ENCODE measurements at regions of chr5 and their contacts with region 1.

Region 1: DNA sequence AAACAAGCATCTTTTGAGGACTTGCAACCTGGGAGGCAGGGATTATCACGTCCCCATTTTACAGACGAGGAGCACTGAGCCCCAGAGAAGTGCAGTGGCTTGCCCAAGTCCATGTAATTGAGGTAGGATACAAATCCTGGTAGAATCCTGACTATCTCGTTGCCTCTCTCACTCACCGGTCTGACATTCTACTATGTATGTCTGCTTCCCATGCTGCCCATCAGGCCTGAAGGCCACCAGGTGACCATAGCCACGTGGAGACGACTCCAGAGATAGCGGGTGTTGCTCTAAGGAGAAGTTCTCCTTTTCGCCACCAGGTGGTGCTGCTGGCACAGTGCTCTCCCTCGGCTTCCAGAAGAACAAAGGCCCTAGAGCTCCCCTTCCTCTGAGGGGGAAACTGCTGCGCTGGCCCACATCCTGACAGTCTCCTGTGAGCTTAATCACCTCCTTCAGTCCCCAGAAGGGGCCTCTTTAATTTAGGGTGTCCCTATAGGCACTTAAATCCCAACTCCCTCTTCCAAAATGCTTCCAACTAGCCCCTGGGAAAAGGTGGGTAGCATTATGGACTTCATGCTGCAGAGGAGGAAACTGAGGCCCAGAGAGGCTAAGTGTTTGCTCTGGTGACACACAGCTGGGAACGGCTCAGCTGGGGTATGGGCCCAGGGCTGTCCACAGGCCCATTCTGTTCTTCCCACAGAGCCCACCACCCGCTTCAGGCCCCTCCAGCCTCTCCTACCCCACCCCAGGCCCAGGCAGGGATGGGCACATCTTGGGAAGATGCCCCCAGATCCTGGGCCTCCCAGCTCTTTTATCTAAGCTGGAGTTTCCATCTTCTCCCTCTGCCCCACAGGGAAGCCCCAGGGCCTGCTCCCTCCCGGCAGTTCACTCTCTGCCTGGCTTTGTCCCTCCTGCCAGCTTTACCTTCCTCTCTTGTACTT is 6.4 kb downstream of the SLC34A1 start:
- DNase-seq: peak; percentile 92 to 93 (median 92)
- ATAC-seq: peak; percentile 96
- H3K4me3 ChIP-seq: no peak overlapping the region
- H3K27ac ChIP-seq: no peak overlapping the region
- H3K4me1 ChIP-seq: peaks cover 7 to 8% of the 10 kb centered on the region in 2 experiments; a peak in 3 of 5 replicates
- H3K27me3 ChIP-seq: peaks cover 0 to 4% of the 10 kb centered on the region in 2 experiments; a peak in 3 of 5 replicates
- CTCF ChIP-seq: peak; percentile 96 to 97 (median 97)
- EP300 ChIP-seq: no peak; the same call in 1 of the 2 replicates
- POLR2A ChIP-seq: no peak
- RAD21 ChIP-seq: peak; percentile 84 to 93

Region 2: DNA sequence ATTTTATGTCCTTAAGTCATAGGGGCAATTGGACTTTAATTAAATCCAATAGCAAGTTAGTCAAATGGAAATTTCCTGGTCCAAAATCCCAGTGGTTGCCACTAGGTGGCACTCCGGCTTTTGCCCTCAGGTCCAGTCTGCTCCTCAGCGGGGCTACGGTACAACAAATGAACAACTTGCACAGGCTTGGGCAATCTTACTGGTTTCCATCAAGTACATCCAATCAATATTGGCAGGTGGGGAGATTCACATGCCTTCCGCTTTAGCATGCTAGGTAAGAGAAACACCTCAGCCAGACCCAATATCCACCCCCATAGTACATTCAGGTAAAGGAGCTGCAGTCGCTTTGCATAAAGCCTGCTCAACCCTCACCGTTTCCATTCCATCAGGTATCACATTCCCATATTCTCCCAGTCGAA is 72.7 kb before region 1 on chr5:
- CTCF ChIA-PET with region 1: interaction called, 7 read pairs
- POLR2A ChIA-PET with region 1: interaction called, 3 read pairs
- in situ Hi-C with region 1: no loop called
- intact Hi-C with region 1: loop called (anchors 1 kb)
- DNase-seq: peak; percentile 60 to 85 (median 70)
- ATAC-seq: peak; percentile 78
- H3K4me3 ChIP-seq: no peak overlapping the region
- H3K27ac ChIP-seq: no peak overlapping the region
- H3K4me1 ChIP-seq: peaks cover 4 to 33% of the 10 kb centered on the region in 2 experiments
- H3K27me3 ChIP-seq: no peaks in the 10 kb centered on the region
- CTCF ChIP-seq: peak; percentile 87 to 98 (median 94)
- EP300 ChIP-seq: no peak
- POLR2A ChIP-seq: no peak
- RAD21 ChIP-seq: peak; percentile 70 to 87

Region 3: GRCh38 chr5:177353093-177353492 is 37.5 kb before region 1 on chr5:
- CTCF ChIA-PET with region 1: no interaction called
- POLR2A ChIA-PET with region 1: no interaction called
- in situ Hi-C with region 1: no loop called
- intact Hi-C with region 1: no loop called
- DNase-seq: no peak
- ATAC-seq: no peak
- H3K4me3 ChIP-seq: no peak overlapping the region
- H3K27ac ChIP-seq: no peak overlapping the region
- H3K4me1 ChIP-seq: peaks cover 15 to 32% of the 10 kb centered on the region in 2 experiments; a peak in 4 of 5 replicates
- H3K27me3 ChIP-seq: no peaks in the 10 kb centered on the region
- CTCF ChIP-seq: no peak
- EP300 ChIP-seq: no peak
- POLR2A ChIP-seq: no peak
- RAD21 ChIP-seq: no peak

Region 4: DNA sequence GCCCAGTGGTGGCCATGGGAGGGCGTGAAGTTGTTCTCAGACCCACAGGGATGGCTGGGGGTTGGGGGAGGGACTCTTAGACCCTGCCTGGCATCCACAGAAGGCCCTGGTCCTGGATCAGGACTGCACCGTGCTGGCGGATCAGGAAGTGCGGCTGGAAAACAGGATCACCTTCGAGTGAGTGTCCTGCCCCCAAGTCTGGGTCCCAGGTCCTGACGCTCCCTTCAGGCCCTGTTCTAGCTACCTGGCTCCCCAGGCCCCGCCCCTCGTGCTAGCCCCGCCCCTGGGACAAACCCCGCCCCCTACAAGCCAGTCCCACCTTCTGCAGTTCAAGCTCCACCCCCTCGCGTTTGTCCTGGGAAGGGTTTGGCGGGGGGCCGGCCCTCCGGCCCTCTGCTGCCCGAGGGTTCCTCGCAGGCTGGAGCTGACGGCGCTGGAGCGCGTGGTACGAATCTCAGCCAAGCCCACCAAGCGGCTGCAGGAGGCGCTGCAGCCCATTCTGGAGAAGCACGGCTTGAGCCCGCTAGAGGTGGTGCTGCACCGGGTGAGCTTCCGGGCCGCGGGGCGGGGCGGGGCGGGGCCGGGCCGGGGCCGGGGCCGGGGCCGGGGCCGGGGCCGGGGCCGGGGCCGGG is 20.0 kb before region 1 on chr5:
- CTCF ChIA-PET with region 1: interaction called, 4 read pairs
- POLR2A ChIA-PET with region 1: interaction called, 4 read pairs
- in situ Hi-C with region 1: no loop called
- intact Hi-C with region 1: loop called (anchors 1 kb)
- DNase-seq: peak; percentile 89 to 97 (median 92)
- ATAC-seq: peak; percentile 83
- H3K4me3 ChIP-seq: peak overlapping the region; percentile 45
- H3K27ac ChIP-seq: peak overlapping the region; percentile 32; the same call in 2 of the 3 replicates
- H3K4me1 ChIP-seq: peaks cover 46 to 63% of the 10 kb centered on the region in 2 experiments
- H3K27me3 ChIP-seq: no peaks in the 10 kb centered on the region
- CTCF ChIP-seq: peak; percentile 61 to 99 (median 97)
- EP300 ChIP-seq: peak; percentile 7; the same call in 1 of the 2 replicates
- POLR2A ChIP-seq: no peak
- RAD21 ChIP-seq: peak; percentile 56 to 69

Region 5: DNA sequence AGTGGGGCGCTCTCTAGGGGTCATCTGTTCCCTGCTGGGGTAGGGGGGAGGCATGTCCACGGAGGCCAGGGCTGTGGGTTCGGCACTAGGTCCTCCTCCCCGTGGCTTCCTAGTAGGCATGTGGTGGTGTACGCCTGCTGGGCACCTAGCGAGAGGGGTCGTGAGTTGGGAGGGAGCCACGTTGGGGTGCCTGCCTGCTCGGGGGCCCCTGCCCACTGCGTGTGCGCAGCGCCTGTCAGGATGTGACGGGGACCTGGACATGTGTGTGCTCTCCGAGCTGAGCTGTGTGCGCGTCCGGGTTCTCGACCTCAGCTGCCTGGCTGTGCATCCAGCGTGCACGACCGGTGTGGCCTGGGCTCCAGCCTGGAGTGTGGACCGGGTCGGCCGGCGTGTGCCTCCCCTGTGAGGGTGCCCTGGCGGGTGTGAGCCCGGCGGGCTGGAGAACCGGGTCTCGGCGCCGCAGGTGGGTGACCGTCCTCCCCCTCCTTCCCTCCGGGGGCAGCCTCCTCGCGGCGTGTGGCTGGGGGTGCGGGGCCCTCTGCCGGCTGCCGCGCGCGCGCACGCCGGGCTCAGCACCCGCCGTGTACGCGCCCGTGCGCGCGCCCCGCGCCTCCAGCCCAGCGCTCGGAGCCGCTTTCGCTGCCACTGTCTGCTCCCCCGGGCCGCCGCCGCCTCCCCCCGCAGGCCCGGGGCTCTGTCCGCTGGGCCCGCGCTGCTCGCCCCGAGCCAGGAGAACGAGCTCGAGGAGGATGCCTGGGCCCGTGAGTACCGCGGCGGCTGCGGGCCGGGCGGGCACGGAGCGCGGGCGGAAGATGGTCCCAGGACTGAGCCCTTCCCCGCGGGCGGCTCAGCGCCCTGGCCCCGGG is 55.8 kb after region 1 on chr5 and contains the start of gene PRR7:
- CTCF ChIA-PET with region 1: interaction called, 3 read pairs
- POLR2A ChIA-PET with region 1: interaction called, 4 read pairs
- in situ Hi-C with region 1: loop called (anchors 5 kb)
- intact Hi-C with region 1: no loop called
- DNase-seq: peak; percentile 80 to 86 (median 86)
- ATAC-seq: peak; percentile 59
- H3K4me3 ChIP-seq: peak within 1 kb of the TSS; percentile 62
- H3K27ac ChIP-seq: peak within 1 kb of the TSS; percentile 59
- H3K4me1 ChIP-seq: peaks cover 19 to 53% of the 10 kb centered on the region in 2 experiments
- H3K27me3 ChIP-seq: no peaks in the 10 kb centered on the region
- CTCF ChIP-seq: peak; percentile 11 to 32 (median 17); a peak in 2 of 6 replicates
- EP300 ChIP-seq: no peak
- POLR2A ChIP-seq: peak; percentile 74
- RAD21 ChIP-seq: peak; percentile 22; a peak in 2 of 4 replicates
- polyA plus RNA-seq, gene PRR7: not detected

Region 6: GRCh38 chr5:178069909-178070308 is 679.3 kb after region 1 on chr5:
- CTCF ChIA-PET with region 1: no interaction called
- POLR2A ChIA-PET with region 1: no interaction called
- in situ Hi-C with region 1: loop called (anchors 10 kb)
- intact Hi-C with region 1: no loop called
- DNase-seq: peak; percentile 59 to 77 (median 68)
- ATAC-seq: peak; percentile 95
- H3K4me3 ChIP-seq: no peak overlapping the region
- H3K27ac ChIP-seq: no peak overlapping the region
- H3K4me1 ChIP-seq: peaks cover 0 to 3% of the 10 kb centered on the region in 2 experiments; a peak in 2 of 5 replicates
- H3K27me3 ChIP-seq: peaks cover 19 to 29% of the 10 kb centered on the region in 2 experiments
- CTCF ChIP-seq: peak; percentile 78 to 88 (median 80)
- EP300 ChIP-seq: no peak
- POLR2A ChIP-seq: no peak
- RAD21 ChIP-seq: peak; percentile 60 to 80